Heart right ventricle (tissue), 16 donors: ENCODE measurements at regions of chr5 and their contacts with region 1.

Region 1: DNA sequence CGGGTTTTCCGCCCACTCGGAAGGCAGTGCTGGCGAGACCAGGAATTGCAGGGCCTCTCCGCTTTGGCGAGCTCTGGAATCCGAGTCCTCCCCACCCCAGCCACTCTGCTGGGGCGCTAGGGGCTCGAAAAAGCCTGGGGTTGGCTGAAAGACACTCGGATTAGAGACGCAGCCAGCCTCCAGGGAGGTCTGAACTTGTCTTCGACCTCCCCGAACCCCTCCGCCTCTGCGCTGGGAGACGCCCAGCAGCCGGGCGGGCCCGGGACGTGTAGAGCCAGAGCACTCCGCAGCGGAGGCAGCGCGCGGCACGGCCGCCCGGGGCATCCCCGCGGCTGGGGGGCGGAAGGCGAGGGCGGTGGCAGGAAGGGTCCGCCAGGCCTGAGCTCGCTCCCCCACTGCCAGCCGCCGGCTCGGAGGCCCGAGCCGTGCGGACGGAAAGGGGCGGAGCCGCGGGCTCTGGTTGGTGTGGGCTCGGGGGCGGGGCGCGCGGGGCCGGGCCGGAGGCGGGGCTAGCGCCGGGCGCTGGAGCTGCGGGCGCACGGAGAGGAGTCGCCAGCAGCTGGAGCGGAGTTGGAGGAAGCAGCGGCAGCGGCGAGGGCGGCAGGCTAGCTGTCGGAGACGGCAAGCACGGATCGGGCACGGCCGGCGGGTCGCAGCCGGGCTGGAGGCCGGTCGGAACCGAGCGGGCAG is at the start of gene PIK3R1:
- DNase-seq: peak; percentile 95 to 97
- ATAC-seq: peak; percentile 93 to 98 (median 96)
- H3K4me3 ChIP-seq: peak within 1 kb of the TSS; percentile 80 to 99 (median 96)
- H3K27ac ChIP-seq: peak within 1 kb of the TSS; percentile 97 to 100 (median 99)
- H3K4me1 ChIP-seq: peaks cover 2 to 40% (median 31%) of the 10 kb centered on the region in 9 donors
- H3K27me3 ChIP-seq: no peaks in the 10 kb centered on the region
- CTCF ChIP-seq: peak in 7 of 9 donors; percentile 4 to 70 (median 43)
- total RNA-seq, gene PIK3R1: 45.6 to 269 (median 148) TPM

Region 2: DNA sequence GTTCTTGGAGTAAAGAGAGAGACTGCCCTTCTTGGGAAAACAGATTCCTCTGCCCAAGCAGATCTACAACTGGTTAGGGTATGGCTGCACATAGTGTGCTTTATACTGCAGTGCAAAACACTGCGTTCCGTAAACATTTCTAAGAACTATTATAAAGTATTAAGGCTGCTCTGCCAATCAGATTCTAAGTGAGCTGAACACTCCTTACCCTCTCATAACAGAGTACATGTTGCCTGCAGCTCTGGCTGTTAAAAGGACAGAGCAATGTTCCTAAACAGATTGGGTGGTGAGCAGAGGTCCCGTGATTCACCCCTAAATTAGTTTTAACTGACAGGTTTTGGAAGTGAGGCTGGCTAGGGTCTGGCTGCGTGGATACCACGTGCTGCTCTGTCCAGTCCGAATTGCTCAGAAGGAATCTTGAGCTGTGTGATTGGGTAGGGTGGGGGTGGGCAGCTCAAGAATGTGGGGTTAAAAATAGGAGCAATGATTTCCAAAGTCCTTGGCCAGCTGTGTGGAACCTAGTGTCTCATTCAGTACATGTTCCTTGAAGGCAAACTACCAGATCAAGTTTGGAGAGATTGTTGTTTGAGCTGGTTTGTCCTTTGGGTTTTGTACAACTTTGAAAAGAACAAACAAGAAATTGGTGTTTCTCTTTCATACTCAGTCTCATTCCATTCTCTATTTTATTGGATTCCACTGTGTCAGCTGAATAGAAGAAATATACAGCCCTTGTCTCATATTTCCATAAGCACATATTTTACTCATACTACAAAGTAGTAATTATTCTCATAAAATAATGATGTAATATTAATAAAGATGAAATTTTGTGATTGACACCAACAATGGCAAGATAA is 521.2 kb before region 1 on chr5:
- intact Hi-C with region 1: loop called in 1 of 10 experiments (anchors 5 kb)
- DNase-seq: peak; percentile 47 to 73
- ATAC-seq: peak; percentile 95 to 99 (median 96)
- H3K4me3 ChIP-seq: no peak overlapping the region
- H3K27ac ChIP-seq: peak overlapping the region in 9 of 10 donors; percentile 21 to 83 (median 74)
- H3K4me1 ChIP-seq: peaks cover 3 to 20% (median 11%) of the 10 kb centered on the region in 9 donors
- H3K27me3 ChIP-seq: no peaks in the 10 kb centered on the region
- CTCF ChIP-seq: no peak

Region 3: DNA sequence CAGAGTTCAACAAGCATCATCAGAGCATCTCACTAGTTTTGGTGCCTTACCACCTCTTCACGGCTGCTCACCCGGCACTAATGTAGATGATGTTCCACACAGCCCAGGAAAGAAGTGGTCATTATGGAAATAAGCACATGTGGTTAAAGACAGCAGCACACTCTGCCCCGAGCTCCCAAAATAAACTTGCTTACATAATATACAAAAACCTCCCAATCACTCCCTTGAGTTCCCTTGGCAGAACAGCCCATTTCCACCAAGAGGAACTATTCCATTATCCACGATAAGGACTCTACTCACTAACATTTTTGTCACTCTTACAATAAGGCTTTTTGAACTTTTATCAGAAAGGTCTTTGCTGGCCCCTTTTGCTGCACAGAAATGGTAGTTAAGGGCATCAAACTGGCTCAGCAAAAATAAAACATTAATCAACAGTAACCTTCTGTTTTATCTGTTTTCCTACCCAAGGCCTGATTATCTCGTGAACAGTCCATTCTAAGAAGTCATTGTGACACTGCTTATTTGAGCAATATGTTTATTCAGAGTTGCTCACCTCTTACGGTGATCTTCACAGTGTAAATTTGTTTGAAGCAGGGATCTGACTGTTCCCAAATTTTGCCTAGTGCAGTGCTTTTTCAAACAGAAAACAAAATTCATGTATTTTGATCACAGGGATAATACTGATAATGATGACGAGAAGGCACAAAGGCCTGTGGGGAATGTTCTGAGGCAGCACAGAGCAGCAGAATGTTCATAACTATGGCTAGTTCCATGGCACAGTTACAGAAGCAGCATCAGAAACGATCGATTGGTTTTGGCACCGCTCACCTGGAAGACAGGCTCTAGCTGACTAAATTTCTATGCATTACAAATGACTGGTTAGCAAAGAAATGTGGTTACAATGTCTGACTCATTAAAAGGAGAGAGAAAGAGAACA is 399.6 kb before region 1 on chr5:
- intact Hi-C with region 1: loop called in 1 of 10 experiments (anchors 10 kb)
- DNase-seq: peak in 1 of 2 donors; percentile 31
- ATAC-seq: peak; percentile 73 to 97 (median 94)
- H3K4me3 ChIP-seq: no peak overlapping the region
- H3K27ac ChIP-seq: peak overlapping the region in 9 of 10 donors; percentile 18 to 77 (median 68)
- H3K4me1 ChIP-seq: peaks cover 8 to 30% (median 22%) of the 10 kb centered on the region in 9 donors
- H3K27me3 ChIP-seq: no peaks in the 10 kb centered on the region
- CTCF ChIP-seq: no peak

Region 4: DNA sequence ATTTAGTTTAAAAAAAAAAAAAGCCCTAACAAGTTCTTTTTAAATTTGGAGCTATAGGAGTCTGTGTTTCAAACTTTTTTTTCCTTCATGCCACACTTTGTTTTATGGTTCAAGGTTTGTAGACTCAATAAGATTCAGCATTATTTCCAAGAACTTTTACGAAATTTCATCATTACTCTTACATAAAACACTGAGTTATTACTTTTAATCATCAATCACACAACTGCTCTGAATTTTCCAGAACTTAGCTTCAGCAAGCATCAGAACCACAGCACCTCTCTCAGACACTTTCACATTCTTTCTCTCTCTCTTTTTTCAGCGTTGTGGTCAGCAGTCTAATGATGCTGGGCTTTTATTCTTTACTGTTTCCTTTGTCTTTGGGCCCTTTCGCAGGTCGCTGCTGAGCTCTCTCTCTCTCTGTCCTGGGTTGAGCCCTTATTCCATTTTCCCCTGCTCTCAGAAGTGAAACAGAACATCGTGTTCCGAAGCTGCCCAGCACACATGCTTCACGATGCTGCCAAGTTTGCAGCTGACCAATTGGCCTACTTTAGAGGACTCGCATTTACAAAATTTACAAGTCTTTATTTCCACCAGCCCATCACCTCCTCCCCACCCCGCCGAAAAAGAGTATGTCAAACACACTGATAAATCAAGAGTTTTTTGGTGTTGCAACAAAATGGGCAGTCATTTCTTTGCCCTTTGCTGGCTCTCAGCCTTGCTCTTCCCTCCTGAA is 44.4 kb before region 1 on chr5:
- intact Hi-C with region 1: loop called in 1 of 10 experiments (anchors 1 kb)
- DNase-seq: peak; percentile 42 to 44
- ATAC-seq: peak; percentile 88 to 99 (median 94)
- H3K4me3 ChIP-seq: peak overlapping the region in 1 of 10 donors; percentile 27
- H3K27ac ChIP-seq: peak overlapping the region; percentile 27 to 73 (median 62)
- H3K4me1 ChIP-seq: peaks cover 3 to 27% (median 23%) of the 10 kb centered on the region in 9 donors
- H3K27me3 ChIP-seq: no peaks in the 10 kb centered on the region
- CTCF ChIP-seq: no peak

Region 5: GRCh38 chr5:68252673-68253623 is 37.6 kb after region 1 on chr5:
- intact Hi-C with region 1: loop called in 5 of 10 experiments (anchors 5 kb)
- DNase-seq: peak in 1 of 2 donors; percentile 66
- ATAC-seq: peak; percentile 60 to 82 (median 70)
- H3K4me3 ChIP-seq: peak overlapping the region in 3 of 10 donors; percentile 1 to 12 (median 10)
- H3K27ac ChIP-seq: peak overlapping the region; percentile 11 to 86 (median 69)
- H3K4me1 ChIP-seq: peaks cover 28 to 100% (median 96%) of the 10 kb centered on the region in 9 donors
- H3K27me3 ChIP-seq: no peaks in the 10 kb centered on the region
- CTCF ChIP-seq: peak; percentile 47 to 86 (median 77)

Region 6: DNA sequence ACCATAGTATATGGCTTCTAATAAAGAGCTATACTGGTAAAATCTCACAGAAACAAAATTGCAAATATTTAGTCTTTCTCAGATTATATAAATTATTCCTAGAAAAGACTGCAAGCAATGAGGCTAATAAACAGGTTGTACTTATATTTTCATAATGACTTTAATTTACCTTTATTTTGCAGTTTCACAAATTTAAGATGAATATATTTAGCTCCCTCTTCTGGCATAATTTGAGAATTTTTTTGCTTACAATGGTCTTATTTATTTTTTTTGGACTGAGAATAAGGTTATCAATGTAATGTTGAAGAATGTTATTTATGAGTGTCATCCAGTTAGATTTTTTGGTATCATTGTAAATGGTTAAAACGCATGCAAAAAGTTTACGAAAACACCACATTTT is 56.9 kb after region 1 on chr5:
- intact Hi-C with region 1: no loop called
- DNase-seq: no peak
- ATAC-seq: no peak
- H3K4me3 ChIP-seq: no peak overlapping the region
- H3K27ac ChIP-seq: peak overlapping the region in 6 of 10 donors; percentile 51 to 92 (median 76)
- H3K4me1 ChIP-seq: peaks cover 13 to 99% (median 78%) of the 10 kb centered on the region in 9 donors
- H3K27me3 ChIP-seq: no peaks in the 10 kb centered on the region
- CTCF ChIP-seq: peak in 8 of 9 donors; percentile 7 to 64 (median 48)

Region 7: GRCh38 chr5:68505917-68506860 is 290.8 kb after region 1 on chr5:
- intact Hi-C with region 1: no loop called
- DNase-seq: no peak
- ATAC-seq: no peak
- H3K4me3 ChIP-seq: no peak overlapping the region
- H3K27ac ChIP-seq: no peak overlapping the region
- H3K4me1 ChIP-seq: no peaks in the 10 kb centered on the region
- H3K27me3 ChIP-seq: no peaks in the 10 kb centered on the region
- CTCF ChIP-seq: no peak